ENCODE measurements at regions of chr14 and their contacts with region 1.

Region 1: GRCh38 chr14:30270200-30271161 is 288.5 kb upstream of the G2E3 start:
- DNase-seq: no peak
- H3K4me3 ChIP-seq: peak overlapping the region; percentile 15
- H3K27me3 ChIP-seq: no peaks in the 10 kb centered on the region; the same call in 1 of the 2 replicates
- CTCF ChIP-seq: peak; percentile 98

Region 2: DNA sequence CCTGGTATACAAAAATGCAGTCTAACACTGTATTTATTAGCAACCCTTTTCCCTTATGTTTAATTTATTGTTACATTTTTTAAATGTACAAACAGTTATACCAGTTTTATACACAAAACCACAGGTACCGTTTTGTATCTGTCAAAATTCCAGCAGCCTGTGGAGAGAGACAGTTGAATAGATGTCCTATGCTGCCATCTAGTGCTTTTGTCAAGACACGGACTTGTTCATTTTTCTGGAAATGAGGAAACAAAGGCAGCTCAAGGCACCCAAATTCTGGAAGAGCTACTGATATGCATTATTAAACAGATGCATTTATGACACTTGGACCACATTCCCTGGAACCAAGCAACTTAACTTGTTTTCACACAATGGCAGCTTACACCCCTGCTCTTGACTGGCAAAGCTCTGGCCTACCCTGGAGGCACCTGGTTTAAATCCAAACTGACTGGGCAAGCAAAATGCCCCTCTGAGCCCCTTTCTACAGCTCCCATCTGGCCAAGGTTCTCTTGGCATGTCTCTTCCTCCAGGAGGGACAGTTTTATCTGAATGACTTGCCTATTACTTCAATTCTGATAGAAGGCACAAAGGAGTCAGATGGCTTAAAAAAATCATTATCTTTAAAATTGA is 55.9 kb before region 1 on chr14:
- CTCF ChIA-PET with region 1: interaction called, 25 read pairs
- POLR2A ChIA-PET with region 1: no interaction called
- DNase-seq: no peak
- H3K4me3 ChIP-seq: no peak overlapping the region
- H3K27me3 ChIP-seq: no peaks in the 10 kb centered on the region
- CTCF ChIP-seq: peak; percentile 64

Region 3: GRCh38 chr14:30223385-30223813 is 47.1 kb before region 1 on chr14:
- CTCF ChIA-PET with region 1: interaction called, 17 read pairs
- POLR2A ChIA-PET with region 1: no interaction called
- DNase-seq: peak; percentile 46
- H3K4me3 ChIP-seq: no peak overlapping the region
- H3K27me3 ChIP-seq: no peaks in the 10 kb centered on the region
- CTCF ChIP-seq: no peak

Region 4: GRCh38 chr14:30252783-30253674 is 17.5 kb before region 1 on chr14:
- CTCF ChIA-PET with region 1: interaction called, 66 read pairs
- POLR2A ChIA-PET with region 1: no interaction called
- DNase-seq: no peak
- H3K4me3 ChIP-seq: no peak overlapping the region
- H3K27me3 ChIP-seq: no peaks in the 10 kb centered on the region
- CTCF ChIP-seq: no peak

Region 5: GRCh38 chr14:30283826-30284446 is 13.5 kb after region 1 on chr14:
- CTCF ChIA-PET with region 1: interaction called, 99 read pairs
- POLR2A ChIA-PET with region 1: no interaction called
- DNase-seq: no peak
- H3K4me3 ChIP-seq: no peak overlapping the region
- H3K27me3 ChIP-seq: no peaks in the 10 kb centered on the region
- CTCF ChIP-seq: peak; percentile 93

Region 6: GRCh38 chr14:30291216-30291615 is 20.7 kb after region 1 on chr14:
- CTCF ChIA-PET with region 1: interaction called, 99 read pairs
- POLR2A ChIA-PET with region 1: no interaction called
- DNase-seq: no peak
- H3K4me3 ChIP-seq: no peak overlapping the region
- H3K27me3 ChIP-seq: no peaks in the 10 kb centered on the region
- CTCF ChIP-seq: no peak

Region 7: GRCh38 chr14:30541318-30541717 is 270.8 kb after region 1 on chr14:
- CTCF ChIA-PET with region 1: no interaction called
- POLR2A ChIA-PET with region 1: interaction called, 10 read pairs
- DNase-seq: no peak
- H3K4me3 ChIP-seq: no peak overlapping the region
- H3K27me3 ChIP-seq: no peaks in the 10 kb centered on the region; the same call in 1 of the 2 replicates
- CTCF ChIP-seq: no peak